Naive thymus-derived CD4-positive, alpha-beta T cell (primary cell): ENCODE measurements at regions of chr17 and their contacts with region 1.

Region 1: GRCh38 chr17:64063766-64064224 is 43.4 kb upstream of the ICAM2 start:
- DNase-seq: peak; percentile 36 to 71 (median 56)
- ATAC-seq: peak; percentile 73
- H3K4me3 ChIP-seq: no peak overlapping the region
- H3K4me3 Mint-ChIP-seq: peak overlapping the region in 3 of 10 donors; percentile 33 to 64 (median 54)
- H3K27ac ChIP-seq: no peak overlapping the region
- H3K27ac Mint-ChIP-seq: peak overlapping the region in 5 of 9 donors; percentile 51 to 80 (median 69)
- H3K4me1 ChIP-seq: peaks cover 23 to 84% of the 10 kb centered on the region in 2 donors
- H3K4me1 Mint-ChIP-seq: peaks cover 40 to 88% (median 56%) of the 10 kb centered on the region in 7 donors
- H3K27me3 ChIP-seq: no peaks in the 10 kb centered on the region
- H3K27me3 Mint-ChIP-seq: no peaks in the 10 kb centered on the region

Region 2: GRCh38 chr17:64051153-64051552 is 12.6 kb before region 1 on chr17:
- CTCF ChIA-PET with region 1: interaction called, 14 read pairs
- POLR2A ChIA-PET with region 1: interaction called, 15 read pairs
- intact Hi-C with region 1: loop called in 1 of 2 experiments (anchors 2 kb)
- DNase-seq: peak in 7 of 9 donors; percentile 58 to 86 (median 76)
- ATAC-seq: peak; percentile 99
- H3K4me3 ChIP-seq: peak overlapping the region; percentile 19
- H3K4me3 Mint-ChIP-seq: peak overlapping the region; percentile 1 to 73 (median 60)
- H3K27ac ChIP-seq: peak overlapping the region; percentile 55
- H3K27ac Mint-ChIP-seq: peak overlapping the region; percentile 86 to 97 (median 95)
- H3K4me1 ChIP-seq: peaks cover 32 to 37% of the 10 kb centered on the region in 2 donors
- H3K4me1 Mint-ChIP-seq: peaks cover 26 to 52% (median 43%) of the 10 kb centered on the region in 7 donors
- H3K27me3 ChIP-seq: no peaks in the 10 kb centered on the region
- H3K27me3 Mint-ChIP-seq: no peaks in the 10 kb centered on the region

Region 3: DNA sequence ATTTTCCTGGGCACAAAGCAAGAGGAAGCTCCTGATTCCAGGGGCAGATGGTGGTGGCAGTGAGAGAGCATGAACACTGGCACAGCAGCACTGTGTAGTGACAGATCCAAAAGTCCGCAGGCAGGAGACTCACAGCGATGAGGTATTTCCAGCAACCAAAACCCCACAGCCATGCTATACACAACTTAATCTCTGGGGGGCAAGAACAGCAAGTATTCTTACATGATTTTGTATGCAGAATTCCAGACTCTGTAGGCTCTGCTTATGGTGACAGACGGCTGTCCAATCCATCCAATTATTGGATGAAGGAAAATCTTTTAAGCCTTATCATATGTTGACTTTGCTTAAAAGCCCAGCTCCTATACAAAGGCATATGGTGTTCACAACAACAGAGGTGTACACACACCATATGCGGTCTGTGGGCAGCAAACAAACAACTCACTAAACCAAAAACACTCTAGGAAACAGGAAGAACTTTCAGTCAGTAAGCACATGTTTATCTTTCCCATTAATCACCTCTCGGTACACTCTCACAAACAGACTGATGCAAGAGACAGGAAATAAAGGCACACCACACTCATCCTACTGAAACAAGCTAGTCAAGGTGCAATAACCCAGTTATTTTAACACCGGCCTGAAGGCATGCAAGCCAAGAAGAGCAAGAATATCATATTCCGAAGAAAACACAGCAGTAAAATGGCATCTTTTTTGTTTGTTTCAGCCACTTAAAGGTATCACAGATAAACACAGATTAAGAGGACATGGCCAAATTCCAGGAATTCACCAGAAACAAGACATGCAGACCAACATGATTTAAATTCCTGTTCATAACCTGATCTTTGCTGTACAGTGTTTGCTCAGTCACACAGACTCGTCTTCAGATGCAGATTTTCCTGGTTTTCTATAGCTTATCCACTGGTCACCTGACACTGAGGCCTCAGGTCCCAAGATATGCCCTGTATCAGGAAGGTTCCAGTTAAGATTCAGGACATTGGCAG is 18.3 kb after region 1 on chr17:
- CTCF ChIA-PET with region 1: interaction called, 3 read pairs
- POLR2A ChIA-PET with region 1: interaction called, 11 read pairs
- intact Hi-C with region 1: loop called (anchors 2 kb)
- DNase-seq: peak in 5 of 9 donors; percentile 21 to 36 (median 30)
- ATAC-seq: peak; percentile 81
- H3K4me3 ChIP-seq: peak overlapping the region; percentile 4
- H3K4me3 Mint-ChIP-seq: peak overlapping the region in 8 of 10 donors; percentile 49 to 84 (median 72)
- H3K27ac ChIP-seq: peak overlapping the region; percentile 37
- H3K27ac Mint-ChIP-seq: peak overlapping the region in 6 of 9 donors; percentile 52 to 91 (median 74)
- H3K4me1 ChIP-seq: peaks cover 49 to 75% of the 10 kb centered on the region in 2 donors
- H3K4me1 Mint-ChIP-seq: peaks cover 7 to 25% (median 11%) of the 10 kb centered on the region in 7 donors
- H3K27me3 ChIP-seq: no peaks in the 10 kb centered on the region
- H3K27me3 Mint-ChIP-seq: no peaks in the 10 kb centered on the region

Region 4: GRCh38 chr17:64120127-64120810 is 56.5 kb after region 1 on chr17:
- CTCF ChIA-PET with region 1: interaction called, 5 read pairs
- POLR2A ChIA-PET with region 1: interaction called, 4 read pairs
- intact Hi-C with region 1: loop called in 1 of 2 experiments (anchors 2 kb)
- DNase-seq: no peak
- ATAC-seq: no peak
- H3K4me3 ChIP-seq: no peak overlapping the region
- H3K4me3 Mint-ChIP-seq: peak overlapping the region in 7 of 10 donors; percentile 8 to 92 (median 81)
- H3K27ac ChIP-seq: peak overlapping the region; percentile 64
- H3K27ac Mint-ChIP-seq: peak overlapping the region; percentile 77 to 97 (median 90)
- H3K4me1 ChIP-seq: peaks cover 27 to 36% of the 10 kb centered on the region in 2 donors
- H3K4me1 Mint-ChIP-seq: peaks cover 40 to 76% (median 50%) of the 10 kb centered on the region in 7 donors
- H3K27me3 ChIP-seq: no peaks in the 10 kb centered on the region
- H3K27me3 Mint-ChIP-seq: no peaks in the 10 kb centered on the region

Region 5: GRCh38 chr17:64281962-64282727 is 218.3 kb after region 1 on chr17:
- CTCF ChIA-PET with region 1: no interaction called
- POLR2A ChIA-PET with region 1: interaction called, 3 read pairs
- intact Hi-C with region 1: loop called in 1 of 2 experiments (anchors 1 kb)
- DNase-seq: peak in 8 of 9 donors; percentile 31 to 61 (median 54)
- ATAC-seq: peak; percentile 83
- H3K4me3 ChIP-seq: no peak overlapping the region
- H3K4me3 Mint-ChIP-seq: no peak overlapping the region
- H3K27ac ChIP-seq: no peak overlapping the region
- H3K27ac Mint-ChIP-seq: peak overlapping the region in 1 of 9 donors; percentile 20
- H3K4me1 ChIP-seq: peaks cover 0 to 5% of the 10 kb centered on the region in 2 donors
- H3K4me1 Mint-ChIP-seq: peaks cover 0 to 7% (median 0%) of the 10 kb centered on the region in 7 donors
- H3K27me3 ChIP-seq: no peaks in the 10 kb centered on the region
- H3K27me3 Mint-ChIP-seq: peaks cover 0 to 8% (median 0%) of the 10 kb centered on the region in 5 donors

Region 6: DNA sequence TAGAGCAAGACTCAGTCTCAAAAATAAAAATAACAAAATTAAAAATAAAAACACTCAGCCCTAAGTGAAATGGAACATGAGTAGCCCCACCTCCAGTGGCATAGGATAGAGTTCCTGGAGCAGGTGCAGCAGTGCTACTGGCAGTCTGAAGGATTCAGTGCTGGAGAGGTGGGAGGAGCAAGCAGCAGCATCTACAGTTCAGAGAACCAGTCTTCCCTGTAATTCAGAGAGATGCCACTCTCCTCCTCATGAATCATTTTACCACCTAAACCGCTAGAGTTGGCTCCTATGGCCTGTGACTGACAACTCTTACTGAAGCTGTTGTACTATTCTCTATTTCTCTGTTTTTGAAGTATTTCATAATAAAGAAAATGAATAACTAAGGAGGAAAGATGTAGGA is 654.3 kb after region 1 on chr17:
- CTCF ChIA-PET with region 1: no interaction called
- POLR2A ChIA-PET with region 1: no interaction called
- intact Hi-C with region 1: no loop called
- DNase-seq: no peak
- ATAC-seq: no peak
- H3K4me3 ChIP-seq: no peak overlapping the region
- H3K4me3 Mint-ChIP-seq: no peak overlapping the region
- H3K27ac ChIP-seq: no peak overlapping the region
- H3K27ac Mint-ChIP-seq: no peak overlapping the region
- H3K4me1 ChIP-seq: peaks cover 14 to 16% of the 10 kb centered on the region in 2 donors
- H3K4me1 Mint-ChIP-seq: peaks cover 6 to 26% (median 19%) of the 10 kb centered on the region in 7 donors
- H3K27me3 ChIP-seq: no peaks in the 10 kb centered on the region
- H3K27me3 Mint-ChIP-seq: no peaks in the 10 kb centered on the region